Activated naive CD4-positive, alpha-beta T cell treated with anti-CD3 and anti-CD28 coated beads for 36 hours (primary cell): ENCODE measurements at regions of chr6 and their contacts with region 1.

Region 1: DNA sequence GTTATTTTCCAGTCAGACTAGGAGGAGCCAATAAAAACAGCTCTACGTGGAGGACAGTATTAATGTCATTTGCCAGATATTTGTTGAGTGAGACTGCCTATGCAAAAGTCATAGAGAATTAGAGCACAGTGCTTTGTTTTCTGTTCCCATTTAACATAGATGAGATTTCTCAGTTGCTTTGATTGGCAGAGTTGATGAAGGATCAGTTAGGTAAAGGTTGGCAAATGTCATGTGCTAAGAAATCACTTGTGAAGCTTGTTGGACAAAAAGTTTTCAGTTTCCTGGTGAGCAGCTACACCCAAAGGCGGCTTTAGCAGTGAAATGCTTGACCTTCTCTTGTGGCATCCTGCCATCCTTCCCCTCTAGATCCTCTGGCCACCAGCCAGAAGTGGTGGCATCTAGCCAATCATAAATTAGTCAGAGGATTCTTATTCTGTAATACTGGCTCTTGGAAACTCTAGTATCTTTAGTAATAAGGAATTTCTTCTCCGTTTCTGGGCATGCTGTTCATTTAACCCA is 37.0 kb downstream of the BCKDHB start:
- DNase-seq: no peak
- H3K4me3 Mint-ChIP-seq: no peak overlapping the region
- H3K27ac Mint-ChIP-seq: no peak overlapping the region
- H3K4me1 Mint-ChIP-seq: no peaks in the 10 kb centered on the region
- H3K27me3 Mint-ChIP-seq: no peaks in the 10 kb centered on the region

Region 2: GRCh38 chr6:79713701-79714322 is 429.7 kb before region 1 on chr6:
- CTCF ChIA-PET with region 1: no interaction called
- intact Hi-C with region 1: no loop called
- DNase-seq: peak; percentile 67
- H3K4me3 Mint-ChIP-seq: no peak overlapping the region
- H3K27ac Mint-ChIP-seq: no peak overlapping the region
- H3K4me1 Mint-ChIP-seq: no peaks in the 10 kb centered on the region
- H3K27me3 Mint-ChIP-seq: peaks cover 7% of the 10 kb centered on the region

Region 3: DNA sequence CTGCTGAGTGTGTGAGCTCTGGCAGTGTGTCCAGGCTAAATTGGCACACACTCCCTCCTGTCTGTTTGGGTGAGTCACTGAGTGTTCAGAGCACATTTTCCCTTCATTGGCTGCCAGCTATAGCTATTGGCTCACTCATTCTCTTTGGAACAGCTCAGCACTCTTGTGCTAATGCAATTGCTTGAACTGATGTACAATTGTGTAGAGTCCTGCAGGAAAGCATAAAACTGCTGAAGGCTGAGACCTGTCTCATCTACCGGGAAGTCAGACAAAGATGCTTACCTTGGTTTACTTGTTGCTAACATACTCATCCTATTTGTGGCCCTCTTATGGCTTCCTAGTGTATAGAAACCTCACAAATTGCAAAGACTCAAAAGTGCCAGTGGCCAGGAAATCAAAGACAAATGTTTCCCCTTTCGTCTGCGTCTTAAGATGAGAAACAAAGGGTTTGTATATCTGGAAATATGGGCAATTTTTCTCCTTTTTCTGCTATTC is 314.0 kb after region 1 on chr6:
- CTCF ChIA-PET with region 1: no interaction called
- intact Hi-C with region 1: no loop called
- DNase-seq: no peak
- H3K4me3 Mint-ChIP-seq: no peak overlapping the region
- H3K27ac Mint-ChIP-seq: no peak overlapping the region
- H3K4me1 Mint-ChIP-seq: no peaks in the 10 kb centered on the region
- H3K27me3 Mint-ChIP-seq: no peaks in the 10 kb centered on the region

Region 4: DNA sequence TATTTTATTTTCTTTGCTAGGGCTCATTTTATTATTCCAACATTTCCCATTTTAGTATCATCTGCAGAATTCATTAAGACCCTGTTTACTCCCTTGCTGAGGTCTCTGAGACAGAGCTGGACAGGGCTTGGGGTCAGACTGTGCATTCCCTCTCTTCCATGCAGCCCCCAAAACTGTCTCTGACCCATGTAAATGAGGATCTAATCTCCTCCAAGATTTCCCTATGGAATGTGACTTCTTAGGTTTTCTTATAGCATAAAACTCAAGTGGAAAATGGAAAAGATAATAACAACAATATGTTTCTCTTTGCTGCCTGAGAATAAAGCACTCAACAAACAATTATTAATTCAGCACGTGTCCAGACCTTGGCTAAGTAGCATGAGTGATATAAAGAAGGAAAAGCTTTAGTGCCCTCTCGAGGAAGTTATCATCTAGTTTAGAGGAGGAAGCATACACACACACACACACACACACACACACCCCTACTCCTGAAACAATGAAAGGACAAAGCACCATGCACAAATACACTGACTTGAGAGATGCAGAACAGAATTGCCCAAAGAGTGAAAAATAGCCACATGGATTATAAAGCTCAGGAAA is 778.5 kb after region 1 on chr6:
- CTCF ChIA-PET with region 1: no interaction called
- intact Hi-C with region 1: loop called (anchors 10 kb)
- DNase-seq: no peak
- H3K4me3 Mint-ChIP-seq: no peak overlapping the region
- H3K27ac Mint-ChIP-seq: no peak overlapping the region
- H3K4me1 Mint-ChIP-seq: no peaks in the 10 kb centered on the region
- H3K27me3 Mint-ChIP-seq: no peaks in the 10 kb centered on the region